ENCODE measurements at regions of chr14 and their contacts with region 1.

Region 1: DNA sequence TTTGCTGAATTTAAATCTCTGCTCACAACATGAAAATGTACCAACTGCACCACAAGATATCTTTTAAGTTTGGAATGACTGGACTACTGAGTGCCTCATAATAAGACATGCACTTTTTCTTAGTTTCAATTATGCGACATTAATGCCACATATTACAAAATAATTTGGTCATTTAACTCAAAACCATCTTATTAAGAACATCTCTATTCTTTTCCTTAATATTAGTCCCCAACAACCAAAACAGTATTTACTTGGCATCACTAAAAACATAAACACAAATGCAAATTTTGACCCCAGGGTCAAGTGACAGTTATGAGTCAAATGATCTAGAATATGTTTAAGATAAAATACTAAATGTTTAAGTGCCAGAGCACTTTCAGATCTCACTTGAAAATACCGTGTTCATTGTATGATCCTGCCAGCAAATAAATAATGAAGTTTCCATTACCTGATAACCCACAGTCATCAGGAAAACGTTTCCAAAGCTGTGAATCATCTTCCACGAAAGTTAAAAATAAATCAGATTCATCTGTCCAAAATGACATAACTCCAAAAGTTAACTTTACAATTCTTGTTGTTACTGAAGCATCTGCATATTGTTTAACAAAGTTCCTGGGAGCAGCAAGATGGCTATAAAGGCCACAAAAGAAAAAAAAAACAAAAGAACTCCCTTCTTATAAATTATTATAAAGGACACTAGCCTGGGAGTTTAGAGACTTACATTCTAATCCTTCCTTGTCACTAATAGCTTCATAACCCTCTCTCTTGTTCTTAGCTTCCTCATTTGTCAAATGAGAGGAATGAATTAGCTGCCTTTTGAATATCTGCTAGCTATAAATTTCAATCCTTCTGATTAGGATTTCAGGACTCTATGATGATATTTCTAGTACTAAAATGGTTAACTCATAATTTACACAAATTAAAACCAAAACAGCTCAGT is 30.5 kb upstream of the AP4S1 start:
- DNase-seq: no peak
- H3K4me3 ChIP-seq: no peak overlapping the region
- H3K27ac ChIP-seq: no peak overlapping the region
- H3K4me1 ChIP-seq: peaks cover 26% of the 10 kb centered on the region
- CTCF ChIP-seq: no peak

Region 2: DNA sequence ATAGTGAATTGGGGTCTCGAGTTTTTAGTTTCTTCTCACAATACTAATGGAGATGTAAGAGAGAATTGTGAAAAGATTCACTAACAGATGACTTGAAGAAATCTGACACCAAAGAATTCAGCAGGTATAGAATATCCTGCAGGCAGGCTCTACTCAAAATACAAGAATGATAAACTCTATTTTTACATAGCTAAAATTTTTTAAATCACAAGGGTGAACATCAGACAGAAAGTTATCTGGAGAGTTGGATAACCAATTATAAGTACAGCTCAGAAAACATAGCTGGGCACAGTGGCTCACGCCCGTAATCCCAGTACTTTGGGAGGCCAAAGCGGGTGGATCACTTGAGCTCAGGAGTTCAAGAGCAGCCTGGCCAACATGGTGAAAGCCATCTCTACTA is 10.6 kb after region 1 on chr14:
- CTCF ChIA-PET with region 1: interaction called, 3 read pairs
- POLR2A ChIA-PET with region 1: interaction called, 12 read pairs
- intact Hi-C with region 1: no loop called
- DNase-seq: no peak
- H3K4me3 ChIP-seq: no peak overlapping the region
- H3K27ac ChIP-seq: no peak overlapping the region
- H3K4me1 ChIP-seq: no peaks in the 10 kb centered on the region
- CTCF ChIP-seq: no peak

Measured in OCI-LY7 (cell line).